Activated B cell treated with CpG ODN at 0.5 μM for 24 hours (primary cell): ENCODE measurements at regions of chr5 and their contacts with region 1.

Region 1: DNA sequence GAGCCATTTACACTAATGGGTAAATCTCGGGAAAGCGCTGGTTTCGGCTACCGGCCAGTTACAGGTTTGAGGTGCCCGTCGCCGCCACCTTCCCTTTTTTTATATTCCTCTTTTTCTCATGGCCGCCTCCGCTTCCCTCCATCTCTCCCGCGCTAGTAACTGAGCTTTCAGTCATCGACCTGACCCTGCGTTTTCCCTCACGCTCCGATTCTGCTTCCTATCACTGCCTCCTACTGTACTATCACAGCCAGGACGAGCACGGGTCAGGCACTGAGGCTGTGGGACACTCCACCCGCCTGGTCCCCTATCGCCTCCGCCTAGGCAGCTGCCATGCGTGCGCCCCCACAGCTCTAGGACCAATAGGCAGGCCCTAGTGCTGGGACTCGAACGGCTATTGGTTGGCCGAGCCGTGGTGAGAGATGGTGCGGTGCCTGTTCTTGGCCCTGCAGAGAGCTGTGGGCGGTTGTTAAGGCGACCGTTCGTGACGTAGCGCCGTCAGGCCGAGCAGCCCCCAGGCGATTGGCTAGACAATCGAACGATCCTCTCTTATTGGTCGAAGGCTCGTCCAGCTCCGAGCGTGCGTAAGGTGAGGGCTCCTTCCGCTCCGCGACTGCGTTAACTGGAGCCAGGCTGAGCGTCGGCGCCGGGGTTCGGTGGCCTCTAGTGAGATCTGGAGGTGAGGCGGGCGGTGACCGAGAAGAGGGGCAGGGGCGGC is at the start of gene HMGCR:
- DNase-seq: peak; percentile 89
- ATAC-seq: peak; percentile 95
- H3K4me3 Mint-ChIP-seq: no peak within 1 kb of the TSS
- H3K27ac Mint-ChIP-seq: no peak within 1 kb of the TSS
- H3K4me1 Mint-ChIP-seq: peaks cover 30% of the 10 kb centered on the region
- H3K27me3 Mint-ChIP-seq: no peaks in the 10 kb centered on the region
- CTCF ChIP-seq: no peak
- total RNA-seq, gene HMGCR: 105 and 131 TPM in 2 replicates

Region 2: DNA sequence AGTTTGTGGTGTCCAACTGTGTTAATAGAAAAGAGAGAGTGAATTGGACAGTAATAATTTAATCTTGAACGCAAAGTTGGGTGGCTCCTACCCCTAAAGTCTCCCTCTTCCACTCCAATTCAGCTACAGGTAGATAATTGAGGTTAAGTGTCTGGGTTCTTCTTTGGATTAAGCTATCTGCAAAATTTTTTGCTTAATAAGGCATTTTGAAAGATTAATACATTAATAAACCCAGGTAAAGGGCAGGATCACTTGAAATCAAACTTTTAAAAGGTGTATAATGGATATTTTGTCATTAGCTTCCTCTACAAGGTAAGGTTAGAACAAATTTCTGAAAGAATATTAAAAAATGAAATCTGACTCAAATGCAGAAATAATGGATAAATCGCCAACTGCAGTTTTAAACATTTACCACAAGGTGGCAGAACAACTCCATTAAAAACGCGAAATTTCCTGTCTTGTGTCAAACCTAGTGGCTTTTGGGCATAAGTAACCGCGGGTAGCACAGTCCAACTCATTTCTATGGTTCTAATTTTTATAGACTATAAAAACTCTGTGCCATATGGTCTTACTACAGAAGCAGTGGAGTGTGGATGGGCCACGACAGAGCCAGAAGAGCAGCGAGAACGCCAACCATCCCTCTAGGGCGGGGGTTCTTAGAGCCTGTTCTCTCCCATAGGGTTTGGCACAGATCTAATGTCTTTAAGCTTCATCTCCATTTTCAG is 1434.3 kb before region 1 on chr5:
- CTCF ChIA-PET with region 1: no interaction called
- POLR2A ChIA-PET with region 1: no interaction called
- intact Hi-C with region 1: loop called (anchors 2 kb)
- DNase-seq: no peak
- ATAC-seq: no peak
- H3K4me3 Mint-ChIP-seq: no peak overlapping the region
- H3K27ac Mint-ChIP-seq: no peak overlapping the region
- H3K4me1 Mint-ChIP-seq: peaks cover 5% of the 10 kb centered on the region
- H3K27me3 Mint-ChIP-seq: peaks cover 15% of the 10 kb centered on the region
- CTCF ChIP-seq: peak; percentile 69

Region 3: GRCh38 chr5:74408150-74409043 is 928.4 kb before region 1 on chr5:
- CTCF ChIA-PET with region 1: no interaction called
- POLR2A ChIA-PET with region 1: no interaction called
- intact Hi-C with region 1: no loop called
- DNase-seq: no peak
- ATAC-seq: no peak
- H3K4me3 Mint-ChIP-seq: no peak overlapping the region
- H3K27ac Mint-ChIP-seq: no peak overlapping the region
- H3K4me1 Mint-ChIP-seq: no peaks in the 10 kb centered on the region
- H3K27me3 Mint-ChIP-seq: peaks cover 14% of the 10 kb centered on the region
- CTCF ChIP-seq: no peak

Region 4: GRCh38 chr5:75053304-75054133 is 283.3 kb before region 1 on chr5:
- CTCF ChIA-PET with region 1: no interaction called
- POLR2A ChIA-PET with region 1: no interaction called
- intact Hi-C with region 1: loop called (anchors 1 kb)
- DNase-seq: no peak
- ATAC-seq: no peak
- H3K4me3 Mint-ChIP-seq: peak overlapping the region; percentile 73
- H3K27ac Mint-ChIP-seq: no peak overlapping the region
- H3K4me1 Mint-ChIP-seq: peaks cover 10% of the 10 kb centered on the region
- H3K27me3 Mint-ChIP-seq: peaks cover 53% of the 10 kb centered on the region
- CTCF ChIP-seq: no peak

Region 5: GRCh38 chr5:75574791-75575190 is 238.0 kb after region 1 on chr5:
- CTCF ChIA-PET with region 1: interaction called, 3 read pairs
- POLR2A ChIA-PET with region 1: interaction called, 6 read pairs
- intact Hi-C with region 1: loop called (anchors 1 kb)
- DNase-seq: no peak
- ATAC-seq: no peak
- H3K4me3 Mint-ChIP-seq: peak overlapping the region; percentile 76
- H3K27ac Mint-ChIP-seq: peak overlapping the region; percentile 86
- H3K4me1 Mint-ChIP-seq: peaks cover 37% of the 10 kb centered on the region
- H3K27me3 Mint-ChIP-seq: no peaks in the 10 kb centered on the region
- CTCF ChIP-seq: no peak

Region 6: DNA sequence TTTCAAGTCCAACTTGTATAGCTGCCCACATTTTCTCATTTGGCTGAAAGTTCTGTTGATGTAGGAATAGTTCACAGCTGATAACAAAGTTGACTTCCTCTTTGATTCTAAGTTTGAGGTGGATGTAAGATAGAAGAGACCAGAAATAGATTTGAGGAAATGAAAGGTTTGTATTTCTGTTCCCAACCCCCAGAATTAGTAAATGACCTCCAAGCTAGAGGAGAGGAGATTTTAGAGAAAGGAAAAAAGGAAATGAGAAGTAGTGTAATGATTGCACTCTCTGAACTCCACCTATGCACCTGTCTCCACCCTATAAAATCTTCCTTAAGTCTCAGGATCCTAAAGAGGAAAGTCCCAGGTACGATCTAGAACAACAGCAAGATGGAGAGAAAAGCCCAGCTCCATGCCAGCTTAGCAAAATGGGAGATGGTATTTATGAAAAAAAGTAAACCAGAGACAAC is 510.8 kb after region 1 on chr5:
- CTCF ChIA-PET with region 1: no interaction called
- POLR2A ChIA-PET with region 1: no interaction called
- intact Hi-C with region 1: loop called (anchors 2 kb)
- DNase-seq: no peak
- ATAC-seq: peak; percentile 89
- H3K4me3 Mint-ChIP-seq: peak overlapping the region; percentile 50
- H3K27ac Mint-ChIP-seq: peak overlapping the region; percentile 82
- H3K4me1 Mint-ChIP-seq: peaks cover 45% of the 10 kb centered on the region
- H3K27me3 Mint-ChIP-seq: no peaks in the 10 kb centered on the region
- CTCF ChIP-seq: no peak